ENCODE measurements at regions of chr1 and their contacts with region 1.

Region 1: GRCh38 chr1:168342572-168343280 is 62.0 kb downstream of the TBX19 start:
- DNase-seq: peak; percentile 54 to 94
- H3K4me3 ChIP-seq: peak overlapping the region; percentile 13 to 49
- H3K27ac ChIP-seq: peak overlapping the region; percentile 65 to 78
- H3K4me1 ChIP-seq: peaks cover 0 to 8% of the 10 kb centered on the region in 2 donors
- H3K27me3 ChIP-seq: no peaks in the 10 kb centered on the region
- CTCF ChIP-seq: peak; percentile 72 to 78 (median 75)

Region 2: DNA sequence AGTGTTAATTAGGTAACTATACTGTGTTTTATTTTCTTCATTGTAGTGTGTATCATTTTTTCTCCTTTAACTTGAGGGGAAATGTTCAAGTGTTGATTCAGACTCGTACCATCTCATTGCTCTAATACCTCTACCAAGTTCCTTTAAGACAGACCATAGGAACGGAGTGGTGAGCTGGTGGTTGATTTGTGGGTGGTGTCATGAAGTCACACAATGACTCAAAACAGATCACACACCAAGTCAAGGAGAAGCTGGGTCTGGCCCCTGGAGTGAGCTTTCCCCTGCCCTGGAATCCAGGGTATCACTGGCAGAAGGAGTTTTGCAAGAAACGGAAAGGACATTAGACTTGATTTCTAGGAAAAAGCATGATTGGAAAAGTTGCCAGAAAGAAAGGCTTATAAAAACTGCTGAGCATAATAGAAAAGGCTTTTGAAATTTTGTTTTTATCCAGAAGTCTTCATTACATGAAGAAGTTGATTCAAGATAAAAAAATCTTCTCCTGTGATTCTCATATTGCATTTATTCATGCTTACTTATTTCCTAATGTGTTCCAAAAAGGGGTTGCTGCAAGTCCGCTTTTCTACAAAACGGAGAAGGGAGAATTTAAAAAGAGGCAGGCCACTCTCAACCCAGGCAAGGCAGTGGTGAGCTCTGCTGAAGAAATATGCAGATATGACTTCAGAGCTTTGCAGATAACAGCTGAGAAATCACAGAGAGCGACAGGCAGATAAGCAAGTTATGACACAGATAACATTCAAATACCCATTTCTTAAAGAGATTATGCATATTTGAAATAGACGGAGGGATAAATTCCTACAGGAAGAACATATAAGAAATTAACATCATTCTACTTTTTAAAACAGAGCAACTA is 17.7 kb after region 1 on chr1:
- intact Hi-C with region 1: no loop called
- DNase-seq: no peak
- H3K4me3 ChIP-seq: no peak overlapping the region
- H3K27ac ChIP-seq: no peak overlapping the region
- H3K4me1 ChIP-seq: no peaks in the 10 kb centered on the region
- H3K27me3 ChIP-seq: no peaks in the 10 kb centered on the region
- CTCF ChIP-seq: no peak

Region 3: DNA sequence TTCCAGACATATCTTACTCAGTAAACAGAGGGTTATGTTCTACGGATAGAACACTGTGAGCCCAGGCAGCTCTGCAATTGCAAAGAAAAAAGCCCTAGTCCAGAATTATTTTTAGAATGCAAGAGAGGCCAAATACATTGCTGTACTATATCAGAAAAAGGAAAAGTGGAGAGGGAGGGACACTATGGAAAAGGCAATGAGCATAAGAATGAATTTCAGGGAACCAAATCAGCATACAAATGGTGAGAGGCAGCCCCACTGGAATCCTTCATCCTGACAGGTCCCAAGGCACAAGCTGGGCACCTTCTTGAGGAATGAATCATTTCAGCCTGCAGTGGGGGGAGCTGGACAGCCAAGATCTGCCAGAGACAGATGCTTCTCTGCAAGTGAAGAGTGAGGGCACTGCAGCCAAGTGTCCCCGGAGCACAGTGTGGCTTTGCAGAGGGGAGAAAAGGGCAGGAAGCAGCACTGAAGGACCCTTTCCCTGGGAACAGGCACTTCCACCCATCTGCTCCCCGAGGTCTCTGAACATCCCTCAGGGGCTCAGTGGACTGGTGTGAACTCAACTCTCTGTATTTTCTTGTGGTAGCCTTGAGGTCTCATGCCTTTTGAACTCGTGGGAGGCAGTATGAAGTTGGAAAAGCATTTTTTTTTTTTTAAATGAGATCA is 85.5 kb after region 1 on chr1:
- intact Hi-C with region 1: loop called (anchors 5 kb)
- DNase-seq: peak in 1 of 2 donors; percentile 69
- H3K4me3 ChIP-seq: no peak overlapping the region
- H3K27ac ChIP-seq: peak overlapping the region; percentile 44 to 62
- H3K4me1 ChIP-seq: peaks cover 8 to 15% of the 10 kb centered on the region in 2 donors
- H3K27me3 ChIP-seq: no peaks in the 10 kb centered on the region
- CTCF ChIP-seq: no peak

Region 4: DNA sequence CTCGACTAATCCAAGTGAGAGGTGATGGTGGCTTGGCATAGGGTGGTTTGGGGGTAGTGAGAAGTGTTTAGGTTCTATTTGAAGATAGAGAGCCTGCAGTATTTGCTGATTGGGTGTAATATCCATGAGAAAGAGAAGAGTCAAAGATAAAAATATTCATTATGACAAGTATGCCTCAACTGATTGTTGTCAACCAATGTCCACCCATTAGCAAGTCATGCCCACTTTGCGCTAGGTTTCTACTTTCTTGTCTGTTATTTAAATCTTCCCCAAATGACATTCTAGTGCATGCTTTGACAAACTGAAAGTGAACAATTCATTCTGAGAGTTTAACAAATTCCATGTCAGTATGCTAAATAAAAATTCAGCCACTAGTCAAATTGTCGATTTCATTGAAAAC is 229.9 kb after region 1 on chr1:
- intact Hi-C with region 1: loop called (anchors 2 kb)
- DNase-seq: no peak
- H3K4me3 ChIP-seq: no peak overlapping the region
- H3K27ac ChIP-seq: no peak overlapping the region
- H3K4me1 ChIP-seq: no peaks in the 10 kb centered on the region
- H3K27me3 ChIP-seq: no peaks in the 10 kb centered on the region
- CTCF ChIP-seq: no peak

Region 5: GRCh38 chr1:168603501-168604110 is 260.9 kb after region 1 on chr1:
- intact Hi-C with region 1: loop called (anchors 10 kb)
- DNase-seq: peak in 1 of 2 donors; percentile 82
- H3K4me3 ChIP-seq: no peak overlapping the region
- H3K27ac ChIP-seq: no peak overlapping the region
- H3K4me1 ChIP-seq: peaks cover 1 to 10% of the 10 kb centered on the region in 2 donors
- H3K27me3 ChIP-seq: no peaks in the 10 kb centered on the region
- CTCF ChIP-seq: peak; percentile 76 to 86 (median 81)

Region 6: DNA sequence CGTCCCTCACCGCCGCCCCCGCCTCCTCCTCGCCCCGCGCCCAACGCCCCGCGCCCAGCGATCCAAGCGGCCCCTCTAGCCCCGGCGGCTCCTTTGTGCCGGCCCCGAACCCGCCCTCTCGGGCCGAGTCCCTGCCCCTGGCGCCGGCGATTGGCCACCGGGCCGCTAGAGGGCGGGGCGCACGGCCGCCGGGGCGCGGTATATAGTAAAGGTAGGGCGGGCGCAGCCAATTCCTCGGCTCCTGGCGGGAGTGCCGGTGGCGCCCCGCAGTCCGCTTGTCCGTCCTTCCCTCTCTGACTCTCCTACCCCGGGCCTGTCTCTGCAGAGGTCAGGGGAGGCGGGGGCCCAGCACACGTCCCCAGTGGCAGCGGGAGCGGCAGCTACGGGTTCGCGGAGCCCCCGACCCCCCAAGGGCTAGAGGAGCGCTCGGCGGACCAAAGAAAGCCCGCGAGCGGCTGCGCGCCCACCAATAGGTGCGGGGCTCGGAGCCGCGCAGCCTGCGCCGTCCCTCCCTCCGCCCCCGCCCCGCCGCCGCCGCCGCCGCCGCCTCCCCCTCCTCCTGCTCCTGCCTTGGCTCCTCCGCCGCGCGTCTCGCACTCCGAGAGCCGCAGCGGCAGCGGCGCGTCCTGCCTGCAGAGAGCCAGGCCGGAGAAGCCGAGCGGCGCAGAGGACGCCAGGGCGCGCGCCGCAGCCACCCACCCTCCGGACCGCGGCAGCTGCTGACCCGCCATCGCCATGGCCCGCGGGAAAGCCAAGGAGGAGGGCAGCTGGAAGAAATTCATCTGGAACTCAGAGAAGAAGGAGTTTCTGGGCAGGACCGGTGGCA is 763.6 kb after region 1 on chr1 and contains the start of gene ATP1B1:
- intact Hi-C with region 1: loop called (anchors 10 kb)
- DNase-seq: peak; percentile 54 to 92
- H3K4me3 ChIP-seq: peak within 1 kb of the TSS; percentile 60 to 96
- H3K27ac ChIP-seq: peak within 1 kb of the TSS; percentile 74 to 80
- H3K4me1 ChIP-seq: peaks cover 2 to 11% of the 10 kb centered on the region in 2 donors
- H3K27me3 ChIP-seq: no peaks in the 10 kb centered on the region
- CTCF ChIP-seq: peak; percentile 38 to 55 (median 54)
- total RNA-seq, gene ATP1B1: 3.5 TPM

Region 7: DNA sequence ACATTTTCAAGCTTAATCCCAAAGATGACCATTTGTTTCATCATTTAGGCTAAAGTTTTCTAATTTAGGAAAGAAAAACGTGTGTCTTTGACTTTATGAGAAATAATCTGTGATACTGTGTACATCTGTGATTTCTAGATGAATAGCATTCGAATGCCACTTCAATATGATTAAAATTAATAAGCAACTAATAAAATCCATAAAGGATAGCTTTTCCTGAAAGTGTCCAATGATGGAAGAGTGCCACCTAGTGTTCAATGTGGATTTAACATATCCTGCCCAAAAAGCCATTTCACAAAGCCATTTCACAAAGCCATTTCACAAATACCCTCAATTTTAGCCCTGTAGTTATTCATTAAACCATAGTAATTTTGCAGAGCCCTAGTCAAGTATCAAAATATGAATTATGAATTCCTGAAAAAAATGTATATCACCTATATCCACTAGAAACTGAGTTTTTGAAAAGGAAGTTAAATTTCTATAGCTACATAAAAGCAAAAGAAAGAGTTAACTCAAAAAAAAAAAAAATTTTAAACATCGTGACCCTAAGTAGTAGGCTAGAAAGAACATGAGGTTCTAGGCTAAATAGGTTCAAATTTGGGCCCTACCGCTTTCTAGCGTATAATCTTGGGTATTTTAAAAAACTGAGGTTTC is 1005.8 kb after region 1 on chr1:
- intact Hi-C with region 1: loop called (anchors 5 kb)
- DNase-seq: no peak
- H3K4me3 ChIP-seq: no peak overlapping the region
- H3K27ac ChIP-seq: no peak overlapping the region
- H3K4me1 ChIP-seq: no peaks in the 10 kb centered on the region
- H3K27me3 ChIP-seq: no peaks in the 10 kb centered on the region
- CTCF ChIP-seq: peak; percentile 49 to 78 (median 65)